ENCODE measurements at regions of chr13 and their contacts with region 1.

Region 1: GRCh38 chr13:44231786-44232516 is 141.7 kb upstream of the SERP2 start:
- DNase-seq: peak; percentile 84 to 96
- ATAC-seq: peak; percentile 98 to 99
- H3K4me3 ChIP-seq: no peak overlapping the region
- H3K27ac ChIP-seq: peak overlapping the region; percentile 90 to 97
- H3K4me1 ChIP-seq: peaks cover 54% of the 10 kb centered on the region
- CTCF ChIP-seq: no peak
- EP300 ChIP-seq: peak; percentile 91 to 94; a peak in 4 of 5 replicates
- POLR2A ChIP-seq: no peak
- RAD21 ChIP-seq: peak; percentile 41 to 64; a peak in 4 of 5 replicates

Region 2: DNA sequence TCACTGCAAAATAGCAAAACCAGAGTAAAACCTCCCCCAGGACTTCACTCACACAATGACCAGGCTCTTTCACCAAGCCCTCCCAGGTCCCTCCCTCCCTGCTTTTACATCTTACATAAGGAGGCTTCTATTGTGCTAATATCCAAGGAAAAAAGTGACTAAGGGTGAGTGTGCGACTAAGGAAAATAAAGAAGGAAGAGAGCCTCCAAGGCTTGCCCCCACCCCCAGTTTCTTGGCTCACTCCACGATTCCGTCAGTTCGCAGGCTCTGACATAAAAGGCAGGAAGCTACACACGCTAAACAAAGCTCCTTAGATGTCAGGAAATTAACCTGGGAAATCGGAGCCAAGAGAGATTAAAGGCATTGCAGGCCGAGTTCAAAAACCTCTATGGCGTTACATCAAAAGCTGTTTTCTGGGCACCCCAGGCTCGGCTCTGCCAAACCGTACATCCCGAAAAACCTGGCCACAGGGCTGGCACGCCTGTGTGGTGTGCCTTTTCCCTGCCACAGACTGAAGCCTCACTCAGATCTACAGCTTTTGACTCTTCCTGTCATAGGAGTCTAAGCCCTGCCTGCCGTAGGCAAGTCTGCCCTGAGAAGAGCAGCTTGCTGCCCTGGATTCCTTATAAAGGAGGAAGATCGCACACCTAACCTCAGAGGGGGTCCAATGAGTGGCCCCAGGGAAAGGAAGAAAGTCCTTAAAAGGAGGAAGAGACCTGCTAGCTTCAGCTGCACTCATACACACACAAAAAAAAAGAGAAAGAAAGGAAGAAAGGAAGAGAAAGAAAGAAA is 74.6 kb after region 1 on chr13:
- CTCF ChIA-PET with region 1: interaction called, 3 read pairs
- POLR2A ChIA-PET with region 1: interaction called, 13 read pairs
- DNase-seq: peak; percentile 36 to 94
- ATAC-seq: peak; percentile 85
- H3K4me3 ChIP-seq: peak overlapping the region; percentile 17; the same call in 1 of the 3 replicates
- H3K27ac ChIP-seq: peak overlapping the region; percentile 93 to 97
- H3K4me1 ChIP-seq: peaks cover 81% of the 10 kb centered on the region
- CTCF ChIP-seq: no peak
- EP300 ChIP-seq: peak; percentile 94 to 98; a peak in 4 of 5 replicates
- POLR2A ChIP-seq: no peak
- RAD21 ChIP-seq: peak; percentile 39 to 62

Measured in A549 (cell line).